A673 (cell line): ENCODE measurements at regions of chr4 and their contacts with region 1.

Region 1: GRCh38 chr4:74675673-74676279 is 118.5 kb downstream of the BTC start:
- DNase-seq: peak; percentile 48
- H3K4me3 ChIP-seq: no peak overlapping the region
- H3K27ac ChIP-seq: no peak overlapping the region
- H3K4me1 ChIP-seq: no peaks in the 10 kb centered on the region
- H3K27me3 ChIP-seq: no peaks in the 10 kb centered on the region
- CTCF ChIP-seq: peak; percentile 66

Region 2: DNA sequence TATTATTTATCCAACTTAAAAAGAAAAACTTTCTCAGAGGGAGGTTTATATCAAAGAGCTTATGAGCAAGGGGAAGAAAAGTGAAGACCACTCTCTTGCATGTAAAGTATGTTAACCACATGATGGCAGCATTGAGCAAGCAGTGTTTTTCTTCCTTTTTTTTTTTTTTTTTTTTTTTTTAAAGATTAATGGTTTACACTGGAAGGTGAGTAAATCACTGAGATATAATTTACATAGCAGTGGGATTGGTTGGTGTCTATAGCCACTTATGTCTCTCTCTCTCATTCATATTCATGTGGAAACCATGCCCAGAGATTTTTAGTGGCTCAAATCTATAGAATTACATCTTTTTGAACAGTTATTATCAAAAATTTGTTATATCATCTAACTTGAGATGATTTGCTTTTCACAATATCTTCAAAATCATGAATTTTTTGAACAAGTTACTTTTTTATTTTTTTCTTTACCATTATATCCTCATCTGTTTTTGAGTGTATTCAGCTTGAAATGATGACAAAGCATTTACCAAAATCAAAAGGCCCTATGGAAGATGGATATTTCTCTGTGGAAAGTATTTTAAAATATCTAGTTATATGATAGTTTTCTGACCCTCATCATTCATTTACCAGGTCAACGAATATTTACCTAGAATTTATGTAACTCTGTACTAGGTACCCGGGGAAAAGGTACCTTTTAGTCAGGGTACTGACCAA is 486.3 kb before region 1 on chr4:
- CTCF ChIA-PET with region 1: no interaction called
- POLR2A ChIA-PET with region 1: no interaction called
- intact Hi-C with region 1: loop called (anchors 5 kb)
- DNase-seq: peak; percentile 52
- H3K4me3 ChIP-seq: no peak overlapping the region
- H3K27ac ChIP-seq: no peak overlapping the region
- H3K4me1 ChIP-seq: no peaks in the 10 kb centered on the region
- H3K27me3 ChIP-seq: no peaks in the 10 kb centered on the region
- CTCF ChIP-seq: peak; percentile 61

Region 3: DNA sequence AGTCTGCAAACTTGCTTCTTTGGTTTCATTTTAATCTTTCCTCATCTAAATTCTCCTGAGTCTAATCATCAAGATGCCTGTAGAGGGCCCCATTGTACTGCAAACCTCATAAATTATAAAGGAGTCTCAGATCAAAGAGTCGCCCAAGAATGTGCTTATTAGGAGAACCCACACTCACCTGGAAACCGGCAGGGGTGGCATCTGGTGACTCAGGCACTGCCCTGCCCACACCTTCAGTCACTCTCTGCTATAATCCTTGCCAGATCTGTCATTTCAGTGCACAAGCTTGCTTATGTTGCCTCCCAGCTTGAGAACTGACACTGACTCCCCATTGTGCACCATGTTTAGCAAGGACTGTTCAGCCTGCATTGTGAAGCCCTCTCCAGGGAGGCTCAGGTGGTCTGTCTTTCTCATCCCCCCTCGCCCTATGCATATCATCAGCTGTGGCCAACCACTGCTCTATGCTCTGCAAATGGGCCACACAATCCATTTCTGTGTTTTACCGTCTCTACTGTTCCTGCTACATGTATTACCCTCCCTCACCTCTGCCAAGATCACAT is 355.1 kb before region 1 on chr4:
- CTCF ChIA-PET with region 1: interaction called, 6 read pairs
- POLR2A ChIA-PET with region 1: no interaction called
- intact Hi-C with region 1: loop called (anchors 2 kb)
- DNase-seq: peak; percentile 63
- H3K4me3 ChIP-seq: no peak overlapping the region
- H3K27ac ChIP-seq: no peak overlapping the region
- H3K4me1 ChIP-seq: no peaks in the 10 kb centered on the region
- H3K27me3 ChIP-seq: no peaks in the 10 kb centered on the region
- CTCF ChIP-seq: peak; percentile 59

Region 4: DNA sequence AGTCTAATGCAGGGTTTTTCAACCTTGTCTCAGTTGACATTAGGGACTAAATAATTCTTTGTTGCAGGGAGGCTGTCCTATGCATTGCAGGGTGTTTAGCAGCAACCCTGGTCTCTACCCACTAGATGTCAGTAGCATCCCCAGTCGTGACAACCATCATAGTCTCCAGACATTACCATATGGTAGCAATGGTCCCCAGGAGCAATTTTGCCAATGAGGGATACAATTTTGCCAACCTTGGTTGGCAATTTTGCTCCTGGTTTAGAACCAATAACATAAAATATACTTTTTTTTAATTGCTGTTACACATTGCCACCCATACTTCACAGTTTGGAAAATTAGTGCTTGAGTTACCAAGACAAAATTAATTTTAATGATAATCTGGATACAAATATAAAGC is 304.9 kb before region 1 on chr4:
- CTCF ChIA-PET with region 1: no interaction called
- POLR2A ChIA-PET with region 1: no interaction called
- intact Hi-C with region 1: loop called (anchors 5 kb)
- DNase-seq: peak; percentile 68
- H3K4me3 ChIP-seq: no peak overlapping the region
- H3K27ac ChIP-seq: no peak overlapping the region
- H3K4me1 ChIP-seq: no peaks in the 10 kb centered on the region
- H3K27me3 ChIP-seq: no peaks in the 10 kb centered on the region
- CTCF ChIP-seq: peak; percentile 57

Region 5: GRCh38 chr4:74531963-74532794 is 143.6 kb before region 1 on chr4:
- CTCF ChIA-PET with region 1: no interaction called
- POLR2A ChIA-PET with region 1: no interaction called
- intact Hi-C with region 1: loop called (anchors 5 kb)
- DNase-seq: peak; percentile 64
- H3K4me3 ChIP-seq: no peak overlapping the region
- H3K27ac ChIP-seq: no peak overlapping the region
- H3K4me1 ChIP-seq: no peaks in the 10 kb centered on the region
- H3K27me3 ChIP-seq: no peaks in the 10 kb centered on the region
- CTCF ChIP-seq: peak; percentile 52

Region 6: GRCh38 chr4:74555231-74555630 is 120.5 kb before region 1 on chr4:
- CTCF ChIA-PET with region 1: no interaction called
- POLR2A ChIA-PET with region 1: no interaction called
- intact Hi-C with region 1: no loop called
- DNase-seq: no peak
- H3K4me3 ChIP-seq: no peak overlapping the region
- H3K27ac ChIP-seq: no peak overlapping the region
- H3K4me1 ChIP-seq: no peaks in the 10 kb centered on the region
- H3K27me3 ChIP-seq: no peaks in the 10 kb centered on the region
- CTCF ChIP-seq: no peak

Region 7: DNA sequence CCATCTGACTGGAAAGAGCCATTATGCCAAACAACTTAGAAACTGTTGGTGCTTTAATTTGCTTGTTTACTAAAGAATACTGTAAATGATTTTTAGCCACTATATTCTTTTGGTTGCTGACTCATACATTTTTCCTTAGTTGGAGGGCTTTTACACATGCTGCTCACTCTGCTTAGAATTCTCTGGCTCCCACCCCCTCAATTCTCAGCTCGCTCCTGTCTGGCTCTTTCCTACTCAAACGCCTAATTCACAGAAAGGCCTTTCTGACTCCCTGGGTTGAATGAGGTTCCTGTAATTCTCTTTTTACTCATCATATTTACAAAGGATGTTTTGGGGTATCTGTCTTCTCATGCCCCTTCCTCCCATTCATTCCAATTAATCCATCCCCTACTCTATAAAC is 231.0 kb after region 1 on chr4:
- CTCF ChIA-PET with region 1: no interaction called
- POLR2A ChIA-PET with region 1: no interaction called
- intact Hi-C with region 1: no loop called
- DNase-seq: no peak
- H3K4me3 ChIP-seq: no peak overlapping the region
- H3K27ac ChIP-seq: no peak overlapping the region
- H3K4me1 ChIP-seq: no peaks in the 10 kb centered on the region
- H3K27me3 ChIP-seq: no peaks in the 10 kb centered on the region
- CTCF ChIP-seq: no peak